ENCODE measurements at regions of chr16 and their contacts with region 1.

Region 1: DNA sequence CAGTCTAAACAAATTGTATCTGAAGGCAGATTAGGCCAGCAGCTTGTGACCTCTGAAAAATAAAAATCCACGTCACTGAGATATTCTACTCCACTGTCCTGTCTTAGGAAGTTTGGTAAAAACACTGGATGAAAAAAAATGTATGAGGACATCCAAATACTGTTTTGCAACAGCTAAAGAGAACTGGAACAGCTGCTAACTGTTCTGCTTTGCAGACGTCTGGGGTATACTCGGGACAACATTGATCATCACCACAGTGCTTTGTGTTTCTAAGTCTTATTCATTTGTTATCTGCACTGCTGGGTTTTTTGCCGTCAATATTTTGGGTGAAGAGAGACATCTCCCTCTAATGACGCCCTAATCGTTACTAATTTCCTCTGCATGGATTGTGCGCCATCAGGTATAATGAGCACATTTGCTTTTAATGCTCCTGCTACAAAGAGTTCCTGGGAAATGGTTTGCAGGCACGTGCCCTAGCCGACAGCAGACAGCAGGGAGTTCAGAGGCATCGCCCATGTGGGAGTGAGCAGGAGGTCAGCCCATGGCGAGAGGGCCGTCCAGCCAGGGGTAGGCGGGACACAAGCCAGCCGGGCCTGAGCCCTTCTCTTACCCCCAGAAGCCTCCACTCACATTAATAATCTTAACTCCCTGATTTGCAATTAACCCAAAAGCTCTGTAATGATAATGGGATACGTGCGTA is 87.0 kb downstream of the CBLN1 start:
- DNase-seq: no peak
- H3K4me3 ChIP-seq: no peak overlapping the region
- H3K27ac ChIP-seq: no peak overlapping the region
- H3K4me1 ChIP-seq: no peaks in the 10 kb centered on the region
- H3K27me3 ChIP-seq: no peaks in the 10 kb centered on the region
- CTCF ChIP-seq: no peak
- POLR2A ChIP-seq: no peak

Region 2: GRCh38 chr16:49910541-49911071 is 715.9 kb after region 1 on chr16:
- intact Hi-C with region 1: loop called (anchors 5 kb)
- DNase-seq: no peak
- H3K4me3 ChIP-seq: no peak overlapping the region
- H3K27ac ChIP-seq: no peak overlapping the region
- H3K4me1 ChIP-seq: no peaks in the 10 kb centered on the region
- H3K27me3 ChIP-seq: no peaks in the 10 kb centered on the region
- CTCF ChIP-seq: no peak
- POLR2A ChIP-seq: no peak

Region 3: GRCh38 chr16:50035468-50035992 is 840.8 kb after region 1 on chr16:
- intact Hi-C with region 1: no loop called
- DNase-seq: no peak
- H3K4me3 ChIP-seq: no peak overlapping the region
- H3K27ac ChIP-seq: no peak overlapping the region
- H3K4me1 ChIP-seq: no peaks in the 10 kb centered on the region
- H3K27me3 ChIP-seq: no peaks in the 10 kb centered on the region
- CTCF ChIP-seq: no peak
- POLR2A ChIP-seq: no peak

Region 4: GRCh38 chr16:51113236-51114125 is 1918.8 kb after region 1 on chr16:
- intact Hi-C with region 1: no loop called
- DNase-seq: no peak
- H3K4me3 ChIP-seq: peak overlapping the region in 1 of 3 donors; percentile 36
- H3K27ac ChIP-seq: no peak overlapping the region
- H3K4me1 ChIP-seq: no peaks in the 10 kb centered on the region
- H3K27me3 ChIP-seq: peaks cover 0 to 40% of the 10 kb centered on the region in 2 donors
- CTCF ChIP-seq: no peak
- POLR2A ChIP-seq: no peak

Measured in breast epithelium (tissue), 4 donors.